HepG2 (cell line): ENCODE measurements at regions of chr1 and their contacts with region 1.

Region 1: DNA sequence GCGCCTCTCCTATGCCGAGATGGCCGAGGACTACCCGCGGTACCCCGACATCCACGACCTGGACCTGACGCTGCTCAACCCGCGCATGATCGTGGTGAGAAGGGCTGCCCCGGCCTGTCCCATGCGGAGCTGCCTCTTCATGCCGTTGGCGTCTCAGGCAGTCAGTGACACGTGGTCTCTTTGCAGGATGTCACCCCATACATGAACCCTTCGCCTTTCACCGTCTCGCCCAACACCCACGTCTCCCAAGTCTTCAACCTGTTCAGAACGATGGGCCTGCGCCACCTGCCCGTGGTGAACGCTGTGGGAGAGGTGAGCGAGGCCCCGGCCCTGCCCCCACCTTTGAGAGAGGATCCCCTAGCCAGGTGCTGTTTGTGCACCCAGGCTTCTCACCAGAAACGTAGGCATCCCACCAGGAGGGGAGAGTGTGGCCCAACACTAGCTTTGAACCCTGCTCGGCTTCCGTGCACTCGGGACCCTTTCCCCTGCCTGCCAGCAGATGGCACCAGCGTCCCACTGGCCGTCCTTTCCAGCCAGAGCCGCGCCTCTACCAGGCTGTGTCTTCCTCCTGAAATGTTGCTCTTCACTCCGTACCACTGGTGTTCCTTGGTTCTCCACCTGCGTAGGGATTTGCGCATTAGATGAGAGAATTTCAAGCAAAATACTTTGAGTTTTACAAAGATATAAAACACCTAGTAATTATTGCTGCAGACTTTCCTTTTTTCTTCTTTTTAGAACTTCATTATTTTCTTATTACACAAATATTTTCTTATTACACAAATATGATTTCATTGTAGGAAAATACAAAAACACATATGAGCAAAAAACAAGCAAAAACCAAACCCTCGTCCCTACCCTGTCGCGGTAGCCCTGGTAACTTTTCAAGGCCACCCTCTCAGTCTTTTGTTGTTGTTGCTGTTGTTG is 9.0 kb downstream of the NPPA start:
- DNase-seq: peak; percentile 47
- ATAC-seq: peak; percentile 58
- H3K4me3 ChIP-seq: no peak overlapping the region
- H3K27ac ChIP-seq: no peak overlapping the region
- H3K4me1 ChIP-seq: peaks cover 48% of the 10 kb centered on the region
- H3K27me3 ChIP-seq: no peaks in the 10 kb centered on the region
- CTCF ChIP-seq: peak; percentile 99
- EP300 ChIP-seq: no peak
- POLR2A ChIP-seq: no peak
- RAD21 ChIP-seq: peak; percentile 96

Region 2: DNA sequence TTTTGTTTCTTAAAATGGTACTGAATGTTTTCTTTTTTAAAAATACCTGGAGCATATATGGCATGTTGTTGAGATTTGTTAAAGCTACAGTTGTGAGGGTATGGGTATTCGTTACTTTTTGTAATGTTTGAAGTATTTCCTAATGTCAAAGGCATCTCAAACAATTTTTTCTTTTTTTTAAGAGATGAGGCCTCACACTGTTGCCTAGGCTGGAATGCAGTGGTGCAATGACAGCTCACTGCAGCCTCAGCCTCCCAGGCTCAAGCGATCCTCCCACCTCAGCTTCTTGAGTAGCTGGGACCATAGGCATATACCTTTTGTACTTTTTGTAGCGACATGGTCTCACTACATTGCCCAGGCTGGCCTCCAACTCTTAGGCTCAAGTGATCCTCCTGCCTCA is 16.5 kb before region 1 on chr1:
- CTCF ChIA-PET with region 1: no interaction called
- POLR2A ChIA-PET with region 1: no interaction called
- in situ Hi-C with region 1: no loop called
- intact Hi-C with region 1: no loop called
- DNase-seq: no peak
- ATAC-seq: no peak
- H3K4me3 ChIP-seq: no peak overlapping the region
- H3K27ac ChIP-seq: no peak overlapping the region
- H3K4me1 ChIP-seq: no peaks in the 10 kb centered on the region
- H3K27me3 ChIP-seq: no peaks in the 10 kb centered on the region
- CTCF ChIP-seq: no peak
- EP300 ChIP-seq: no peak
- POLR2A ChIP-seq: no peak
- RAD21 ChIP-seq: no peak

Region 3: GRCh38 chr1:11858968-11859871 is 20.6 kb after region 1 on chr1:
- CTCF ChIA-PET with region 1: no interaction called
- POLR2A ChIA-PET with region 1: interaction called, 5 read pairs
- in situ Hi-C with region 1: no loop called
- intact Hi-C with region 1: loop called (anchors 1 kb)
- DNase-seq: peak; percentile 52
- ATAC-seq: peak; percentile 88
- H3K4me3 ChIP-seq: peak overlapping the region in 2 of 3 experiments; percentile 17 to 51; a peak in 2 of 6 replicates
- H3K27ac ChIP-seq: no peak overlapping the region
- H3K4me1 ChIP-seq: no peaks in the 10 kb centered on the region
- H3K27me3 ChIP-seq: peaks cover 2 to 28% of the 10 kb centered on the region in 2 experiments; a peak in 4 of 5 replicates
- CTCF ChIP-seq: peak; percentile 64
- EP300 ChIP-seq: 0 out of 4 replicates have a peak, but pooled peaks of 1 of the 2 experiments have one; percentile 19
- POLR2A ChIP-seq: no peak
- RAD21 ChIP-seq: peak; percentile 58

Region 4: DNA sequence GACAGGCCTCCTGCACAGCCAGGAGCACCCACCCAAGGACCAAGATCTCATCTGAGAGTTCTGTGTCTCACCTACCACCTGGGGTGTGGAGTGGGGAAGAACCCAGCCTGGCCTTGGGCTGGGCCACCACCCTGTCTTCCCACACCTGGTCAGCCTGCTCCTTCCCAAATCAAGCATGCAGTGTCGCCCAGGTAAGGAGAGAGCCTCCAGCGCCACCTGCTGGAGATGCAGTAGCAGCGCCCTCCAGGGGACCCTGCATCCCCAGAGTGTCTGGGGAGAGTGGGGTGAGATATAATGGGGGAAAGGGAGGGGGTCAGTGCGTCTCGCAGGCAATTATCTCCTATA is 55.3 kb after region 1 on chr1:
- CTCF ChIA-PET with region 1: interaction called, 46 read pairs
- POLR2A ChIA-PET with region 1: interaction called, 7 read pairs
- in situ Hi-C with region 1: loop called (anchors 5 kb)
- intact Hi-C with region 1: loop called (anchors 2 kb)
- DNase-seq: peak; percentile 49
- ATAC-seq: peak; percentile 86
- H3K4me3 ChIP-seq: no peak overlapping the region
- H3K27ac ChIP-seq: no peak overlapping the region
- H3K4me1 ChIP-seq: peaks cover 48% of the 10 kb centered on the region
- H3K27me3 ChIP-seq: peaks cover 0 to 4% of the 10 kb centered on the region in 2 experiments; a peak in 2 of 5 replicates
- CTCF ChIP-seq: peak; percentile 96
- EP300 ChIP-seq: no peak
- POLR2A ChIP-seq: peak in 1 of 2 experiments; percentile 27; a peak in 1 of 4 replicates
- RAD21 ChIP-seq: peak; percentile 92

Region 5: GRCh38 chr1:11898831-11899467 is 60.3 kb after region 1 on chr1:
- CTCF ChIA-PET with region 1: interaction called, 46 read pairs
- POLR2A ChIA-PET with region 1: interaction called, 5 read pairs
- in situ Hi-C with region 1: loop called (anchors 5 kb)
- intact Hi-C with region 1: loop called (anchors 2 kb)
- DNase-seq: no peak
- ATAC-seq: peak; percentile 74
- H3K4me3 ChIP-seq: no peak overlapping the region
- H3K27ac ChIP-seq: no peak overlapping the region
- H3K4me1 ChIP-seq: peaks cover 8% of the 10 kb centered on the region
- H3K27me3 ChIP-seq: peaks cover 0 to 11% of the 10 kb centered on the region in 2 experiments; a peak in 3 of 5 replicates
- CTCF ChIP-seq: no peak
- EP300 ChIP-seq: no peak
- POLR2A ChIP-seq: no peak
- RAD21 ChIP-seq: no peak

Region 6: GRCh38 chr1:11967028-11967547 is 128.5 kb after region 1 on chr1:
- CTCF ChIA-PET with region 1: interaction called, 16 read pairs
- POLR2A ChIA-PET with region 1: no interaction called
- in situ Hi-C with region 1: loop called (anchors 10 kb)
- intact Hi-C with region 1: loop called (anchors 2 kb)
- DNase-seq: peak; percentile 89
- ATAC-seq: peak; percentile 94
- H3K4me3 ChIP-seq: no peak overlapping the region
- H3K27ac ChIP-seq: peak overlapping the region; percentile 26
- H3K4me1 ChIP-seq: peaks cover 8% of the 10 kb centered on the region; the same call in 1 of the 2 replicates
- H3K27me3 ChIP-seq: no peaks in the 10 kb centered on the region
- CTCF ChIP-seq: peak; percentile 94
- EP300 ChIP-seq: no peak
- POLR2A ChIP-seq: no peak; a peak in 1 of 4 replicates
- RAD21 ChIP-seq: peak; percentile 92